ENCODE measurements at regions of chr7 and their contacts with region 1.

Region 1: DNA sequence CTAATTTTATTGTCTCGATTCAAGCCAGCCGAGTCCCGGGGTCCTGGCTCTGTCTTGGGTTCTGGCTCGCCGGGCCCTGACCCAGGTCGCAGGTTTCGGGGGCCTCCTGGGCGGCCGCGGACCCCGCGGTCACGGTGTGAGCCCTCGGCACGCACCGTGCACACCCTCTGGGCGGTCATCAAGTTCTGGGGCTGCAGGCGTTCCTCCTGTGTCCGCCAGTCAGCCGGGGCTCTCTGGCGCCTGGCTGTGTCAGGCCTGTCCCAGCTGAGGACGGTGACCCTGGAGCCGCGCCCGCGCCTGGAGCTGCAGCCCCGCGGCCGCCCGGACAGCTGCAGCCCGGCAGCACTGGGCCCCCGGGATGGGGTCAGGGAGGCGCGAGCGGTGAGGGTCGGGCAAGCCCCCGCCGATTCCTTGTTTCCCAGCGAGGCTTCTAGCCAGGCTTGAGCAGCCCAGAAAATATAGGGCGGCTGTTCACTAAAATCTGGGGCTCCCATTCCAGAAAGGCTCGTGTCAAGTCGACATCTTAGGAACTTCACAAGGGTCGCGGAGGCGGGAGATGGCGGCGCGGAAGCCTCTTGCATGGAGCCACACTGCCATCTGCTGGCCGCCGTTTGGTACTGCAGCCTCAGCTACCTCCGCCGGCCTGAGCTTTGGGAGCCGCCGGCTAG is 4.2 kb upstream of the HOXA7 start:
- DNase-seq: peak; percentile 87
- ATAC-seq: peak; percentile 19
- H3K4me3 ChIP-seq: peak overlapping the region; percentile 84
- H3K27ac ChIP-seq: peak overlapping the region; percentile 97
- H3K4me1 ChIP-seq: peaks cover 15% of the 10 kb centered on the region
- H3K27me3 ChIP-seq: no peaks in the 10 kb centered on the region
- CTCF ChIP-seq: peak; percentile 96

Region 2: GRCh38 chr7:26090927-26091519 is 1069.7 kb before region 1 on chr7:
- CTCF ChIA-PET with region 1: no interaction called
- POLR2A ChIA-PET with region 1: no interaction called
- intact Hi-C with region 1: loop called (anchors 5 kb)
- DNase-seq: peak; percentile 60
- ATAC-seq: peak; percentile 89
- H3K4me3 ChIP-seq: peak overlapping the region; percentile 26; the same call in 1 of the 2 replicates
- H3K27ac ChIP-seq: no peak overlapping the region
- H3K4me1 ChIP-seq: peaks cover 8% of the 10 kb centered on the region
- H3K27me3 ChIP-seq: no peaks in the 10 kb centered on the region
- CTCF ChIP-seq: peak; percentile 88

Region 3: DNA sequence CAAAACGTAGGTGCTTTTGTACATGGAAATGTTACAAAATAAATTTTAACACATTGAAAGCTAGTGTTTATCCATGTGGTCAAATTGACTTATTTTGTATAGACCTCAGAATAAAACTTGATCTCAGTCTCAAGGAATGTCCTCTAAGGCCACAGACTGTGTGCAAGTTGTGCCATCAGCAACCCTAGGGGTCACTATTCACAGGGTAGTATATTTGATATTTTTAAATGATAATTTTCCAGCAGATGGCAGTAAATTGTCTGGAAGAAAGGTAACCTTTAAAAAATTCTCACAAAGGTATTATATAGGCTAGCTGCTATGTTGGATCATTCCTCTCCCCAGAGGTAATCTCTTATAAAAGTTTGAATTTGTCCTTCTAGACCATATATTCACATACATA is 881.9 kb before region 1 on chr7:
- CTCF ChIA-PET with region 1: no interaction called
- POLR2A ChIA-PET with region 1: no interaction called
- intact Hi-C with region 1: loop called (anchors 5 kb)
- DNase-seq: peak; percentile 65
- ATAC-seq: peak; percentile 98
- H3K4me3 ChIP-seq: no peak overlapping the region
- H3K27ac ChIP-seq: no peak overlapping the region
- H3K4me1 ChIP-seq: no peaks in the 10 kb centered on the region
- H3K27me3 ChIP-seq: no peaks in the 10 kb centered on the region
- CTCF ChIP-seq: peak; percentile 79

Region 4: GRCh38 chr7:26686448-26686981 is 474.2 kb before region 1 on chr7:
- CTCF ChIA-PET with region 1: interaction called, 19 read pairs
- POLR2A ChIA-PET with region 1: interaction called, 5 read pairs
- intact Hi-C with region 1: loop called (anchors 1 kb)
- DNase-seq: peak; percentile 63
- ATAC-seq: peak; percentile 42
- H3K4me3 ChIP-seq: no peak overlapping the region
- H3K27ac ChIP-seq: no peak overlapping the region
- H3K4me1 ChIP-seq: peaks cover 15% of the 10 kb centered on the region; the same call in 1 of the 2 replicates
- H3K27me3 ChIP-seq: no peaks in the 10 kb centered on the region
- CTCF ChIP-seq: peak; percentile 76

Region 5: GRCh38 chr7:27080844-27081436 is 79.7 kb before region 1 on chr7:
- CTCF ChIA-PET with region 1: no interaction called
- POLR2A ChIA-PET with region 1: no interaction called
- intact Hi-C with region 1: no loop called
- DNase-seq: peak; percentile 77
- ATAC-seq: peak; percentile 42
- H3K4me3 ChIP-seq: no peak overlapping the region
- H3K27ac ChIP-seq: 0 out of 2 replicates have a peak overlapping the region, but pooled peaks have one; percentile 18
- H3K4me1 ChIP-seq: peaks cover 48% of the 10 kb centered on the region
- H3K27me3 ChIP-seq: no peaks in the 10 kb centered on the region
- CTCF ChIP-seq: no peak

Region 6: DNA sequence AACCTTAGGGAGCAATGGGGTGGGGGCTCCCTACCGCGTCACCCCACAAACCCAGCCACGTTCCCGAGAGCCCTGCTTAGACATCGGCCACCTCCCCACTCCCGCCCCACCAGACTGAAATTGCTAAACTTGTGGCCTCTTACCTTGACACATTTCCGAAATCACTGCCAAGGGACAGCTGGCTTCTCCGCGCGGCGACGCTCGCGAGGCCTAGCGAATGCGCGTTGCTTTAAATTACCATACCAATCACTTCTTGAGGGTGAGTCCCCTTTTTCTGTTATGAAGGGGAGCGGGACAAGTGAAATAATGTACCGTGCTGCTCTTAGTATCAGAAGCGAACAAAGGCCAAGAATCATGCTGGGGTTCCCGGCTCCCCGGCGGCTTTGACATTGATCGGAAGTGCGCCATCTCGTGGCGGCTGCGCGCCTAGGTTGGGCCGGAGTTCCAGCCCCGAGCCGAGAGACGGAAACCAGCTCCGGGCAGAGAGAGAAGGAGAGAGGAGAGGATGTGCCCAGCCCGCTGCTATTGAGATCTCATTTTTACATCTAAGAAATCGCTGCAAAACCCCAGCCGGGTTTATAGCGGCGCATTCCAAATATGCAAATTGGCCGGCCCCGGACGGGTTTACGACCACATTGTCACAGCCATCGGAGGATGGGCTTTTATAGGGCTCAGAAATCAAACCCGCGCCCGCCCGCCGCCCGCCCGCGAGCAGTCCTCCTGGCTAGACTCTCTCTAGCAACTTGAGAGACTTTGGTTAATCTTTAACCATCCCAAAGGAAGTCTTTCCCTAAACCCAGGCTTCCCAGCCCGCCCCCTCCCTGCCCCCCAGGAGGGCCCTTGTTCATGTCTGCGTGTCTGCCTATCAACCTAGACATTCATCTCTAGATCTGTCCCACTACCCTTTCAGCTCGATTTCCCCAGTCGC is 19.1 kb after region 1 on chr7:
- CTCF ChIA-PET with region 1: interaction called, 6 read pairs
- POLR2A ChIA-PET with region 1: interaction called, 5 read pairs
- intact Hi-C with region 1: loop called (anchors 1 kb)
- DNase-seq: peak; percentile 90
- ATAC-seq: peak; percentile 19
- H3K4me3 ChIP-seq: peak overlapping the region; percentile 84
- H3K27ac ChIP-seq: peak overlapping the region; percentile 97
- H3K4me1 ChIP-seq: peaks cover 41% of the 10 kb centered on the region
- H3K27me3 ChIP-seq: no peaks in the 10 kb centered on the region
- CTCF ChIP-seq: peak; percentile 91

Region 7: GRCh38 chr7:27359181-27360125 is 198.8 kb after region 1 on chr7:
- CTCF ChIA-PET with region 1: no interaction called
- POLR2A ChIA-PET with region 1: no interaction called
- intact Hi-C with region 1: no loop called
- DNase-seq: no peak
- ATAC-seq: no peak
- H3K4me3 ChIP-seq: no peak overlapping the region
- H3K27ac ChIP-seq: no peak overlapping the region
- H3K4me1 ChIP-seq: peaks cover 6% of the 10 kb centered on the region
- H3K27me3 ChIP-seq: no peaks in the 10 kb centered on the region
- CTCF ChIP-seq: no peak

Measured in PC-3 (cell line).